Endothelial cell of umbilical vein (primary cell): ENCODE measurements at regions of chr6 and their contacts with region 1.

Region 1: DNA sequence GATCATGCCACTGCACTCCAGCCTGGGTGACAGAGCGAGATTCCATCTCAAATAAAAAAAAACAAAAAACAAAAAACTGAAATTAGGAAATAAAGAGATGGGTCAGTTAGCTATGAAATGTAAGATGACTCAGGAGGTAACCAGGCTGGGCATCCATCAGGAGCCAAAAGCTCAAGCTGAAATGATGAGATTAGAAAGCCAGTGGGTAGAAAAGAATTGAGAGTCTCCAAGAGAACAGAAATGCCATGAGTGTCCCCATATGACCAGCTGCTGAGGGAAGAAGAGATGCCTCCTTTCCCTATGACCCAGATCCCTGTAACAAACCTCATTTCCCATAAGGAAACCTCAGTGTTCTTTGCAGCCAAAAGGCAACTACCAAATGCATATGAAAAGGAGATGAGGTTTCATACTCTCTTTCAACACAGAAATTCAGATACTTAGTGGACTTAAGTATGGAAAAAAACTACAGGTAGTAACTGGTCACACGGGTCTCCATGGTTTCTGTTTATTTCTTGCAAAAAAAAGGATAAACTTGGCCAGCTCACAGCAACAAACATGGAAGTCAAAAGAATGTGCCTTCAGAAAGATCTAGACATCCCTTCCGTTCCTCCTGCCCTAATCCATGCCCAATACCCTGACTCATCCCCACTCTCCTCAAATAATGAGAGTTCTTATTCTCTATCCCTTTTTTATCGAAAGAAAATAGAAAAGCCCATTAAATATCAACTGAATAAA is 8.1 kb downstream of the ARHGAP18 start:
- DNase-seq: no peak
- H3K4me3 ChIP-seq: no peak overlapping the region
- H3K27ac ChIP-seq: peak overlapping the region; percentile 66
- H3K4me1 ChIP-seq: peaks cover 66% of the 10 kb centered on the region
- H3K27me3 ChIP-seq: no peaks in the 10 kb centered on the region
- CTCF ChIP-seq: no peak
- POLR2A ChIP-seq: peak; percentile 27

Region 2: GRCh38 chr6:129683601-129684322 is 18.1 kb before region 1 on chr6:
- CTCF ChIA-PET with region 1: interaction called, 5 read pairs
- POLR2A ChIA-PET with region 1: interaction called, 5 read pairs
- dilution Hi-C with region 1: no loop called
- intact Hi-C with region 1: loop called (anchors 2 kb)
- DNase-seq: peak; percentile 97
- H3K4me3 ChIP-seq: peak overlapping the region in 1 of 3 experiments; percentile 6
- H3K27ac ChIP-seq: peak overlapping the region; percentile 98
- H3K4me1 ChIP-seq: peaks cover 77% of the 10 kb centered on the region
- H3K27me3 ChIP-seq: no peaks in the 10 kb centered on the region
- CTCF ChIP-seq: no peak
- POLR2A ChIP-seq: peak; percentile 82